Upper lobe of right lung (tissue), 1 donor: ENCODE measurements at regions of chr18 and their contacts with region 1.

Region 1: DNA sequence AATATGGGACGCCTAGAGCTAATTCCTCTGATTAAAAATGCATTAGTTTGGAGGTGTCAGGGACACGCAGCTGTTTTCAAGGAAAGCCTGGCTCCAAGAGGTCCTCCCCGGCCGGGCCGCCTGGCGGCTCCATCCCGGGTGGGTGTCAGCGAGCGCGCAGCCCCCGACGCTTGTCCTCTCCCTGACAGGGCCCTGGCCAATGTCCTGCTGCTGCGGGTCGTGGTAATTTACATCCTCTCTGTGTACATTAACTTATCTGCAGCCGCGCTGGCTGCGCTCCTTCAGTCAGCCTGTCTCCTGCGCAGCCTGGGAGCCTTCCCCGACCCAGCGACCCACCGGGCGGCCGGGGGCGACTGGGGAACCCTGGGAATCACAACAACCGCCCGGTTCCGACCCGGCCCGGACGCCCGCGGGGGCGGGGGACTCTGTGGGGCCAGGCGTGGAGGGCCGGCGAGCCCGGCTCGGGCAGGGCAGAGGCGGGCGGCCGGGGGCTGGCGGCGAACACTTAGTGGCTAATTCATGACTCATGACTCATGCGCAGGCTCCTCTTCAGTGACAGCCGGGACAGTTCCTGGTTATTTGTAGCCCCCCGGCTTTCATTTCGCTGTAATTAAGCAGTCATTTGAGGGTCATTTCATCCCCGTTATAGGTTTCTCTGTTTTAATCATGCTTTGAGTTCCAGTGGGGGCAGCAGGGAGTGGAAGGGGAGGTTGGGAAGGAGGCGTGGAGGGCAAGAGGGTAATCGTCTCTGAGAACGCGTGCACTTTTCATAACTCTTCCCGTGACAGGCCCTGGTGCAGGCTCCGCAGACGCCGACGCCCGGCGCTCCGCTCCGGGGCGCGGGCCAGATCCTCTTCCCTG is 141.9 kb upstream of the CTAGE1 start:
- DNase-seq: peak; percentile 82
- ATAC-seq: peak; percentile 79
- H3K4me3 ChIP-seq: peak overlapping the region; percentile 58
- H3K27ac ChIP-seq: peak overlapping the region; percentile 89
- H3K4me1 ChIP-seq: peaks cover 5% of the 10 kb centered on the region
- H3K27me3 ChIP-seq: no peaks in the 10 kb centered on the region
- CTCF ChIP-seq: peak; percentile 29

Region 2: GRCh38 chr18:22170421-22171262 is 389.0 kb before region 1 on chr18:
- intact Hi-C with region 1: loop called (anchors 10 kb)
- DNase-seq: peak; percentile 80
- ATAC-seq: peak; percentile 1
- H3K4me3 ChIP-seq: peak overlapping the region; percentile 86
- H3K27ac ChIP-seq: peak overlapping the region; percentile 98
- H3K4me1 ChIP-seq: no peaks in the 10 kb centered on the region
- H3K27me3 ChIP-seq: peaks cover 31% of the 10 kb centered on the region
- CTCF ChIP-seq: no peak

Region 3: GRCh38 chr18:22494771-22495170 is 64.9 kb before region 1 on chr18:
- intact Hi-C with region 1: loop called (anchors 10 kb)
- DNase-seq: no peak
- ATAC-seq: no peak
- H3K4me3 ChIP-seq: no peak overlapping the region
- H3K27ac ChIP-seq: no peak overlapping the region
- H3K4me1 ChIP-seq: no peaks in the 10 kb centered on the region
- H3K27me3 ChIP-seq: no peaks in the 10 kb centered on the region
- CTCF ChIP-seq: no peak

Region 4: DNA sequence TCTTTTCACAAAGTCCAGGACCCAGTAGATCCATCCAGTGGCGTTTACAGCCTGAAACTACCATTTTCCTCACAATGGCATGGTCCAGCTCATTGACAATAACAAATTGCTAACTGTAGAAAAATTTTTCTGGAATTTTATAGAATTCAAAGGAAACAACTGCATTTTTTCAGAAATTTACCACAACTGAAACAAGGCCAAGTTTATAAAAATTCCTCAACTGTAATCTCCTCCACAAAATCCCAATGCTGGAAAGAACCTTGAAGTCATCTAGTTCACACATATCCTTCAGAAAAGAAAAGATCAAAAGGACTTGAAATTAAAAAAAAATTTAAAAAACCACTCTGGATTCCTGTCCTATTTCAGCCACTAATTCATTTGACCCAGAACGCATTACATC is 84.1 kb after region 1 on chr18:
- intact Hi-C with region 1: no loop called
- DNase-seq: no peak
- ATAC-seq: no peak
- H3K4me3 ChIP-seq: no peak overlapping the region
- H3K27ac ChIP-seq: no peak overlapping the region
- H3K4me1 ChIP-seq: no peaks in the 10 kb centered on the region
- H3K27me3 ChIP-seq: no peaks in the 10 kb centered on the region
- CTCF ChIP-seq: no peak